Activated CD8-positive, alpha-beta memory T cell treated with anti-CD3 and anti-CD28 coated beads, Interleukin-2, amount 10 ng/mL, durations not matched to agents 7 days and 5 days (primary cell): ENCODE measurements at regions of chr1 and their contacts with region 1.

Region 1: DNA sequence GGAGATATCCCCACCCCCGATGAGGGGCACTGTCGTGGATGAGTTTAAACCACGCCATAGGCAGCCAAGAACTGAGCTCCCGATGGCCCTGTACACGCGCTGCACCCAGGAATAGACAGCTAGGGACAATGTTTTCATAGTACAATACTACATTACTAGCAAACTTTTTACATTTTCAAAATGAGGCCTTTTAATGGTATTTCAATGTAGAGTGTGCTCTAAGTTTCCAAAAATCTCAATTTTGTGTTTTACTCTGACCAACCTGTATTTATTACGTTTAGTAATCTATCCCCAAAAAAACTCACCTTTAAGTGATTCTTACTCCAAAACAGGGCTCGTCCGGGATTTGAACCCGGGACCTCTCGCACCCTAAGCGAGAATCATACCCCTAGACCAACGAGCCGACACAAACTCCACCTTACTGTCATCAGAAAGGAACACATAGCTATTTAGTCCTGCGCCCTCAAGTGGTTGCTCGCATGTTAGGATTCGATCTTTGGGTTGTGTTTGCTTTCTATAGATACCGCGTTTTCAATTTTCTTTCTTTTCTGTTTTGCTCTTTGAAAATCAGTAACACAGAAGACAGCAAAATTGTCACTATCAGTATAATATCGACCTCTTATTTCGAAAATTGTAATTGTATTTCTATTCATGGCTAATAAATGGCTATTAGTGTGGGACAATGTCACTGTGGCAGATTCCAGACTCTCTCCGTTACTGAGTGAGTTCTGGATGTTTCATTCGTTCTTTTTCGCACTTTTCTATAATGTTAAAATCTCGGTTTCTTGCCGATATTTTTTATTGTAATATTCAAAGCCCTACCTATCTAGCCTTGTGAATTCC is 6.4 kb upstream of the MPZL1 start:
- DNase-seq: peak; percentile 93
- ATAC-seq: peak; percentile 57
- H3K4me3 Mint-ChIP-seq: peak overlapping the region; percentile 80
- H3K27ac Mint-ChIP-seq: peak overlapping the region; percentile 93
- H3K4me1 Mint-ChIP-seq: peaks cover 29% of the 10 kb centered on the region
- H3K27me3 Mint-ChIP-seq: peaks cover 15% of the 10 kb centered on the region

Region 2: GRCh38 chr1:167412072-167412471 is 303.3 kb before region 1 on chr1:
- CTCF ChIA-PET with region 1: no interaction called
- DNase-seq: no peak
- ATAC-seq: no peak
- H3K4me3 Mint-ChIP-seq: no peak overlapping the region
- H3K27ac Mint-ChIP-seq: no peak overlapping the region
- H3K4me1 Mint-ChIP-seq: peaks cover 25% of the 10 kb centered on the region
- H3K27me3 Mint-ChIP-seq: no peaks in the 10 kb centered on the region

Region 3: GRCh38 chr1:167705250-167705649 is 10.1 kb before region 1 on chr1:
- CTCF ChIA-PET with region 1: interaction called, 11 read pairs
- DNase-seq: no peak
- ATAC-seq: no peak
- H3K4me3 Mint-ChIP-seq: no peak overlapping the region
- H3K27ac Mint-ChIP-seq: no peak overlapping the region
- H3K4me1 Mint-ChIP-seq: peaks cover 7% of the 10 kb centered on the region
- H3K27me3 Mint-ChIP-seq: no peaks in the 10 kb centered on the region

Region 4: DNA sequence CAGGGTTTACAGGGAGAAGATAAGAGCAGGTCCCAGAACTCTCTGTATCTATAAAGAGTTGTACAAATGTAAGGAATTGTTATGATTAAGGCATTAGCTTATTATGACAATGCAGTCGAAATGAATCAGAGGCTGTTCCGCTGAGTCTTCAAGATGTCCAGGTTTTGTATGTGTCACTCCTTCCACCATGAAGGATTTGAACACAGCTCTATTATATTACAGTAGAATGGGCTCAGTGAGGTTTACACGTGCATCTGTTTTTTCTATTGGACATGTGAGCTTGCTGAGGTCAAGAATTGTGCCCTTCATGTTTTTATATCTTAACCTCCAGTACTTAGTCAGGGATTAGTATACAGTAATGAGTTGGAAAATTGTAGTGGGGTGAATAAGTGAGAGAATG is 92.7 kb after region 1 on chr1:
- CTCF ChIA-PET with region 1: interaction called, 11 read pairs
- DNase-seq: no peak
- ATAC-seq: no peak
- H3K4me3 Mint-ChIP-seq: no peak overlapping the region
- H3K27ac Mint-ChIP-seq: no peak overlapping the region
- H3K4me1 Mint-ChIP-seq: peaks cover 27% of the 10 kb centered on the region
- H3K27me3 Mint-ChIP-seq: peaks cover 19% of the 10 kb centered on the region

Region 5: DNA sequence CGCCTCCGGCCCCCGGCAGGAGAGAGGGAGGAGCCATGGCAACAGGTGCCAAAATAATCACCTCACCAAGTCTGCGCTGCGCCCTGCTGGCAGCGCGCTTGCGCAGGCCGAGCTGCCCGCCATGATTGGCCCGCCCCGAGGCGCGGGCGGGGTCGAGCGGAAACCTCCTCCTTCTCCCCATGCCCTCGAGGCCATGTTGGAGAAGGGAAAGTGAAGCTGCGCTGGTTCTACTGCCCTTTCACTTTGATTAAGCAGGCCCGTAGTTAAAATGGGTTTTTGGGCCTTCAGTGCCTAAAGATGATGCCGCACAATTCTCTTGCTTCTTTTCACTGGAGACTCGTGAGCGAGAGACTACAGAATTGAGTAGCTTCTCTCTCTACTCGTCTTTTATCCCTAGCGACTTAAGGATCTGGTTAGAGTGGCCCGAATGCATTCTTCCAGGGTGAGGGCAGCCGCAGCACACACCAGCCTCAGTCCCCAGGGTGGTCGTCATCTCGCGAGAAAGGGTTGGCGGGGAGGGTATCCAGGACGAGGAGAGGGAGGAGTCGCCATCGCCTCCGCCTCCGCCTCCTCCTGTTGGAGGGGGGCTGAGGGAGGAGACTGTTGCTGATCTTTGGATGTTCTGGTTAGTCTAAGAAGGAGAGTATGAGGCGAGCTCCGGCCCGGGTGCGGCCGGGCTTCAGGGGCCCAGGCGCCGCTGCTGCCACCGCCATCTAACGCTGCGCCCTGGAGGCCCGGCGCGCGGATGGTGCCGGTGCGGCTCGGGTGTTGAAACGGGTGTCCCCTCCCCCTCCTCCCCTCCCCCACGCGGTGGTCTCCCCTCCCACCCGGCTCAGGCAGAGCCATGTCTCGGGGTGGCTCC is 220.9 kb after region 1 on chr1 and contains the start of gene DCAF6:
- CTCF ChIA-PET with region 1: interaction called, 26 read pairs
- DNase-seq: peak; percentile 98
- ATAC-seq: peak; percentile 84
- H3K4me3 Mint-ChIP-seq: peak within 1 kb of the TSS; percentile 91
- H3K27ac Mint-ChIP-seq: peak within 1 kb of the TSS; percentile 97
- H3K4me1 Mint-ChIP-seq: peaks cover 32% of the 10 kb centered on the region
- H3K27me3 Mint-ChIP-seq: no peaks in the 10 kb centered on the region
- total RNA-seq, gene DCAF6: 27.5 to 31.1 TPM